Activated T-helper 1 cell treated with anti-CD3 and anti-CD28 coated beads, Interleukin-12 subunit alpha, Interleukin-12 subunit beta, Interleukin-2, Interleukin-4 antibody, amounts not matched to agents 30 ng/mL and 10 ng/mL and 1 ng/mL, durations not matched to agents 14 hours and 24 hours and 36 hours (primary cell): ENCODE measurements at regions of chr1 and their contacts with region 1.

Region 1: GRCh38 chr1:55007625-55008024 is 8.9 kb downstream of the BSND start:
- DNase-seq: no peak
- H3K4me3 Mint-ChIP-seq: no peak overlapping the region
- H3K27ac Mint-ChIP-seq: no peak overlapping the region
- H3K4me1 Mint-ChIP-seq: no peaks in the 10 kb centered on the region
- H3K27me3 Mint-ChIP-seq: peaks cover 2% of the 10 kb centered on the region

Region 2: DNA sequence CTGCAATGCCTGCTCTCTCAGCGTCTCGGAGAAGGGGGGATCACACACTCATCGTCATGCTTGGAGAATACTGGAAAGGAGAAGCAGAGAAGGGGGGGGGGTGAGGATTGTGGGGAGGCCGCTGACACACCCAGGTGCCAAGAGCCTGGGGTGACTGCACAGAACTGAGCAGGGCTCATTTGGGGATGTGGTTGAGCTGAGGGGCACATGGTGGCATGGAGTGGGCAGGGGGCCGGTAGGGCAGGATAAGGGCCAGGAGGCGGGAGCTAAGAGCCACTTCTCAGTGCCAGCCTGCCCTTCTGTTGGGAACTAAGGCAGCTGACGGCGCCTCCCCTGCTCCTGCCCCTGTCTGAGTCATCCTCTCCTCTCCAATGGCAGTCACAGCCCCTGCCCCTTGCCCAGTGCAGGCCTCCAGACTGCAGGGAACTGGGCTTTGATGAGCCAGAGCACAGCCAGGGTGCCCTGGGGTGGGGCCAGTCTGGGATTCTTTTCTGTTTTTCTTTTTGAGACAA is 780.5 kb before region 1 on chr1:
- intact Hi-C with region 1: no loop called
- DNase-seq: no peak
- H3K4me3 Mint-ChIP-seq: no peak overlapping the region
- H3K27ac Mint-ChIP-seq: peak overlapping the region; percentile 44
- H3K4me1 Mint-ChIP-seq: peaks cover 27% of the 10 kb centered on the region
- H3K27me3 Mint-ChIP-seq: no peaks in the 10 kb centered on the region

Region 3: DNA sequence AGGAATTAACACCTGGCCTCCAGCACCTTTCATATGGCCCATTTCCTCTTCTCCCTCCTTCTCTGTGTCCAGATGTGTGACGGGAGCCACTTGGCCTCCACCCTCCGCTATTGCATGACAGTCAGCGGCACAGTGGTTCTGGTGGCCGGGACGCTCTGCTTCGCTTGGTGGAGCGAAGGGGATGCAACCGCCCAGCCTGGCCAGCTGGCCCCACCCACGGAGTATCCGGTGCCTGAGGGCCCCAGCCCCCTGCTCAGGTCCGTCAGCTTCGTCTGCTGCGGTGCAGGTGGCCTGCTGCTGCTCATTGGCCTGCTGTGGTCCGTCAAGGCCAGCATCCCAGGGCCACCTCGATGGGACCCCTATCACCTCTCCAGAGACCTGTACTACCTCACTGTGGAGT is 21.6 kb before region 1 on chr1:
- intact Hi-C with region 1: loop called (anchors 1 kb)
- DNase-seq: no peak
- H3K4me3 Mint-ChIP-seq: no peak overlapping the region
- H3K27ac Mint-ChIP-seq: no peak overlapping the region
- H3K4me1 Mint-ChIP-seq: no peaks in the 10 kb centered on the region
- H3K27me3 Mint-ChIP-seq: peaks cover 18% of the 10 kb centered on the region

Region 4: DNA sequence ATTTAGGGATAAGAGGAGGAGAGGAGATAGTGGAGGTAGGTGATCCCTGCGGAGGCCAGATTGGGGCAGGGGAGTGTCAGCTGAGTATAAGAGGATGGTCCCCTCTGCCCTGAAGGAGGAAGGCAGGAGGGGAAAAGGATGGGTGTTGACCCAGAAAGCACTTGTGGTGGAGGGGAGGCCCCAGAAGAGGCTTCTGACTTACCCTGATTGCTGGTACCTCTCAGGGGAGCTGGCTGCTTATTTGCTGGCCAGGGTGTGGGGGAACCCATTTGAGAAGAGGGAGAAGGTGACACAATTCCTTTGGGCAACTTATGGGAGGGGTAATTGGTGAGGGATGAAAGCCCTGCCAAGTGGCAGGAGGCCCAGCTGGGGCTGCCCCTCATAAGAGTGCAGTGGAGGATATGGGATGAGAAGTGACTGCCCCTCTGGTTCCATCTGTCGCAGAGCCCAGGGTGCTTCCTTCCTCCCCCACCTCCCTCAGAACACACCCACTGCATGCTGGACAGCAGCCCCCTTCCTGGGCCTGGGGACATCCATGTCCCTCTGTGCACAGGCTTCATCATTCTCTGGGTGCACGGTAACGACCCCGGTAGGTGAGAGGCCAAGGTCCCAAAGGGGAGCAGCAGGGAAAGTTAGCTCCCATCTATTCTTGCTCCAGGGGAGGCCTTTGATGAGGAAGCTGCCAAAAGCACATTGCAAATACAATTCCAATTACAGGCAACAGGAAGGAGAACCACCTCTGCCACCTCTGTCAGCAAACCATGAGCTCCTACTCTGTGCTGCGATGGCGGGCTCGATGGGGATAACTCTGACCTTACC is 30.3 kb after region 1 on chr1:
- intact Hi-C with region 1: loop called (anchors 1 kb)
- DNase-seq: no peak
- H3K4me3 Mint-ChIP-seq: no peak overlapping the region
- H3K27ac Mint-ChIP-seq: no peak overlapping the region
- H3K4me1 Mint-ChIP-seq: no peaks in the 10 kb centered on the region
- H3K27me3 Mint-ChIP-seq: peaks cover 70% of the 10 kb centered on the region

Region 5: DNA sequence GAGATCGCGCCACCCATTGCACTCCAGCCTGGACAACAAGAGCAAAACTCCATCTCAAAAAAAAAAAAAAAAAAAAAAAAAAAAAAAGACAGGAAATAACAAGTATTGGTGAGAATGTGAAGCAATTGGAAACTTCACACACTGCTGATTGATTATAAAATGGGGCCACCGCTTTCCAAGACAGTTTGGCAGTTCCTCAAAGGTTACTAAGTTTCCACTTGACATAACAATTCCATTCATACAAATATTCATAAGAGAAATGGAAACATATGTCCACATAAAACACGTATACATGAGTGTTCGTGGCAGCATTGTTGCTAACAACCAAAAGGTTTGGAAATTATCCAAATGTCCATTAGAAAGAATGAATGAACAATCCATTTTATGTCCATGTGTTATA is 181.3 kb after region 1 on chr1:
- intact Hi-C with region 1: no loop called
- DNase-seq: no peak
- H3K4me3 Mint-ChIP-seq: no peak overlapping the region
- H3K27ac Mint-ChIP-seq: peak overlapping the region; percentile 60
- H3K4me1 Mint-ChIP-seq: peaks cover 24% of the 10 kb centered on the region
- H3K27me3 Mint-ChIP-seq: no peaks in the 10 kb centered on the region